Gastrocnemius medialis (tissue), 4 donors: ENCODE measurements at regions of chr15 and their contacts with region 1.

Region 1: GRCh38 chr15:98311566-98312188 is 336.7 kb upstream of the IGF1R start:
- DNase-seq: peak; percentile 23 to 55
- ATAC-seq: no peak
- H3K4me3 ChIP-seq: no peak overlapping the region
- H3K27ac ChIP-seq: no peak overlapping the region
- H3K4me1 ChIP-seq: no peaks in the 10 kb centered on the region
- H3K27me3 ChIP-seq: no peaks in the 10 kb centered on the region
- CTCF ChIP-seq: peak; percentile 32 to 75 (median 65)
- POLR2A ChIP-seq: no peak

Region 2: DNA sequence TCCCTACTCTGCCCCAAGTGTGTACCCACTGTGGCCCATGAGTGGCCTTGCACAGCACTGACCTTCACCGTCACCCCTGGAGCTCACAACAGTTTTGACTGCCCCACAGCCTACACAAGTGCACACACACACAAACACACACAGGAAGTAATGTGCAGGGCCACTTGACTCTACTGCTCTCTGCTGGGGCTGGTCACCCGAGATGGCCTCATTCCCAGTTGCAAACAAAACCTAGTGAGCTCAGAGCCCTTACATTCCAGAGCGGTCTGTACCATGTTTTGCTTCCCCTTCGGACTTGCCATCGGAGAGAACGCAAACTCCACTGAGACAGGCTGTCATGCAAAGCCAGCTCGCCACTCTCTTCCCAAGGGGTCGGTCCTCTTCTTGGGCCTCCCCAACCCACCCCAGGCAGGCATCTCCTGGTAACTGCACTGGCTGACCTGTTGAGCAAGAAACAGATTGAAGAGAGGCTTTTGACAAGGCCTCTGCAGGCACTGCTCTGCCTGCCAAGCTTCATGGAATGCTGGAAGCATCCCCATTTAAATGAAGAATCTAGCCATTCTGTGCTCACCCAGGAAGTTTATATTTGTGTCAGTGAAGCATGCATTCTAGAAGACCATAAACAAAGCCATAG is 104.7 kb after region 1 on chr15:
- in situ Hi-C with region 1: loop called (anchors 5 to 10 kb)
- intact Hi-C with region 1: loop called (anchors 1 kb)
- DNase-seq: no peak
- ATAC-seq: no peak
- H3K4me3 ChIP-seq: no peak overlapping the region
- H3K27ac ChIP-seq: no peak overlapping the region
- H3K4me1 ChIP-seq: peaks cover 1 to 2% of the 10 kb centered on the region in 2 donors
- H3K27me3 ChIP-seq: peaks cover 6 to 8% (median 6%) of the 10 kb centered on the region in 3 donors
- CTCF ChIP-seq: no peak
- POLR2A ChIP-seq: no peak

Region 3: DNA sequence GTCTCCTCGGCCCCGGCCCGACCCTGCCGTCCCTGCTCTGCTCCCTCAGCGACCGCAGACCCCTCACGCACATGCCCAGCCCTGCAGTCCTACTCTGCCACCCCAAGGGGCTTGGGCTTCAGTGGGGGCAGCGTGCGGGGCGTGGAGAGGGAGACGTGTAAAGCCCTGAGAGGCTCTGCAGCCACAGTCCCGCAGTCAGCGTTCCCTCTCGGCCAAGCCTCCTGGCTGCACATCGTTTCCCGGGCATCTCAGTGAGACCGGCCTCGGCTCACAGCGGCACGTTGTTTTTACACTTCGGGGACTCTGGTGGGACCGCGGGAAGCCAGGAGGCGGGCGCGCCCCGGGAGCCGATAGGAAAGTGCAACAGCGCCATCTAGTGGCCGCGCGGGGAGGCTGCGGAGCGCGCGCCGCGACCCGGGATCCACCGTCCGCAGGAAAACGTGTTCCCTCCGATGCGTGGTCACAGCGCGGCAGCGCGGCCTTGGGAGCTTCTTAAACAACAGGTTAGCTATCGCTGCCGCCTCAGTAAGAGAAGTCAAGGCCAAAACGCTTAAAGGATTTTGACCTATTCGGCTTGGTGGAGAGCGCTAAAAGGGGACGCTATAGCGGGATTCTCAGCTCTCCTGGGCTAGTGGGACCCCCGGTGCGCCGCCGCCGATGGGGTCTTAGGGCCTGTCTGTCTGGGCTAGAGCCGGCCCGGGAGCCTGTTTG is 109.9 kb after region 1 on chr15:
- in situ Hi-C with region 1: loop called (anchors 5 to 10 kb)
- intact Hi-C with region 1: loop called (anchors 1 kb)
- DNase-seq: peak; percentile 18 to 26
- ATAC-seq: peak; percentile 51 to 67
- H3K4me3 ChIP-seq: peak overlapping the region in 3 of 4 donors; percentile 17 to 34 (median 31)
- H3K27ac ChIP-seq: no peak overlapping the region
- H3K4me1 ChIP-seq: peaks cover 7 to 9% of the 10 kb centered on the region in 2 donors
- H3K27me3 ChIP-seq: peaks cover 17 to 21% (median 18%) of the 10 kb centered on the region in 3 donors
- CTCF ChIP-seq: peak; percentile 89 to 100 (median 95)
- POLR2A ChIP-seq: no peak

Region 4: GRCh38 chr15:98428253-98428989 is 116.7 kb after region 1 on chr15:
- in situ Hi-C with region 1: loop called in 3 of 4 experiments (anchors 5 to 10 kb)
- intact Hi-C with region 1: loop called (anchors 2 kb)
- DNase-seq: peak; percentile 21 to 26
- ATAC-seq: peak; percentile 70 to 81
- H3K4me3 ChIP-seq: peak overlapping the region; percentile 29 to 62 (median 40)
- H3K27ac ChIP-seq: no peak overlapping the region
- H3K4me1 ChIP-seq: no peaks in the 10 kb centered on the region
- H3K27me3 ChIP-seq: peaks cover 12 to 27% (median 16%) of the 10 kb centered on the region in 3 donors
- CTCF ChIP-seq: peak in 4 of 5 experiments; percentile 72 to 89 (median 77)
- POLR2A ChIP-seq: no peak